Dendritic cell treated with granulocyte-macrophage colony-stimulating factor and Interleukin-4, amounts not matched to agents 40 ng/mL and 50 ng/mL, for 4 days (primary cell): ENCODE measurements at regions of chr14 and their contacts with region 1.

Region 1: GRCh38 chr14:63641473-63642228 is at the start of gene WDR89:
- H3K4me3 Mint-ChIP-seq: peak within 1 kb of the TSS; percentile 98
- H3K27ac Mint-ChIP-seq: peak within 1 kb of the TSS; percentile 99
- H3K4me1 Mint-ChIP-seq: peaks cover 16% of the 10 kb centered on the region
- H3K27me3 Mint-ChIP-seq: no peaks in the 10 kb centered on the region

Region 2: DNA sequence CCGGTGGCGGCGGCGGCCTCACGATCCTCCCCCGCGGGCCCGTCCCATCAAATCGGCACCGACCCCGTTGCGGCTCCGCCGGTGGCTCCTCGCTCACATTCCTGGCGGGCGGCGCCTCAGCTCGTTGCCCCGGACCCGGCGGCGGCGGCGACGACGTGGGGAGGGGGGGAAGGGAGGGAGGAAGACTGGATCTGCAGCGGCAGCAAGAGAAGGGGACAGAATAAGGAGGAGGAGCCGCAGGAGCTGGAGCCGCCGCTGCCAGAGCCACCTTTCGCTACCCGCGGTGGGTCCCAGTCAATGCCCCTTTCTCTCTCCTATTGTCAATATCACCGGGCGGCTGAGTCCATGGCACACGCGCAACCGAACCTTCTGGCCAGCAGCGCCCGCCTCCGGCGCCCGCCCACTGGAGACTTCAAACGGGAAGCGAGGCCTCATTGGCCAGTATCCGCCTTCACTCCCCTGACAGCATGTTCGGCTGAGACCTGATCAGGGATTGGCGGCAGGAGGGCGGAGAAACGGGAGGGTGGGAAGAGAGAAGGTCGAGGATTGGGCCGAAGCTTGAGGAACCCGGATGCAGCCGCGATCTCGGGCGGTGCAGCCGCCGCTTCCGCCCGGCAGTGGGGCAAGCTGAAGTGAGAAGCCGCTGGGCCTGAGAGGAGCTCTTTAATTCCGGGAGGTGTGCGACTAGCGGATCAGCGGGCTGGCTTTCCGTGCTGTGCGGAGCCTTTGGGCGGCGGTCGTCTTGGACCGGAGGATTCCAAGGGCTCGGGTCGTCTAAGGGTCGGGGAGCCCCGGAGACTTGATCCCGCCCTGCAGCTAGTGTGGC is 98.4 kb before region 1 on chr14 and contains the start of gene PPP2R5E:
- intact Hi-C with region 1: loop called (anchors 1 kb)
- H3K4me3 Mint-ChIP-seq: peak within 1 kb of the TSS; percentile 93
- H3K27ac Mint-ChIP-seq: peak within 1 kb of the TSS; percentile 94
- H3K4me1 Mint-ChIP-seq: peaks cover 22% of the 10 kb centered on the region
- H3K27me3 Mint-ChIP-seq: no peaks in the 10 kb centered on the region

Region 3: GRCh38 chr14:64338616-64339316 is 697.1 kb after region 1 on chr14:
- intact Hi-C with region 1: loop called (anchors 5 kb)
- H3K4me3 Mint-ChIP-seq: peak overlapping the region; percentile 92
- H3K27ac Mint-ChIP-seq: peak overlapping the region; percentile 91
- H3K4me1 Mint-ChIP-seq: peaks cover 25% of the 10 kb centered on the region
- H3K27me3 Mint-ChIP-seq: no peaks in the 10 kb centered on the region